ENCODE measurements at regions of chr14 and their contacts with region 1.

Region 1: DNA sequence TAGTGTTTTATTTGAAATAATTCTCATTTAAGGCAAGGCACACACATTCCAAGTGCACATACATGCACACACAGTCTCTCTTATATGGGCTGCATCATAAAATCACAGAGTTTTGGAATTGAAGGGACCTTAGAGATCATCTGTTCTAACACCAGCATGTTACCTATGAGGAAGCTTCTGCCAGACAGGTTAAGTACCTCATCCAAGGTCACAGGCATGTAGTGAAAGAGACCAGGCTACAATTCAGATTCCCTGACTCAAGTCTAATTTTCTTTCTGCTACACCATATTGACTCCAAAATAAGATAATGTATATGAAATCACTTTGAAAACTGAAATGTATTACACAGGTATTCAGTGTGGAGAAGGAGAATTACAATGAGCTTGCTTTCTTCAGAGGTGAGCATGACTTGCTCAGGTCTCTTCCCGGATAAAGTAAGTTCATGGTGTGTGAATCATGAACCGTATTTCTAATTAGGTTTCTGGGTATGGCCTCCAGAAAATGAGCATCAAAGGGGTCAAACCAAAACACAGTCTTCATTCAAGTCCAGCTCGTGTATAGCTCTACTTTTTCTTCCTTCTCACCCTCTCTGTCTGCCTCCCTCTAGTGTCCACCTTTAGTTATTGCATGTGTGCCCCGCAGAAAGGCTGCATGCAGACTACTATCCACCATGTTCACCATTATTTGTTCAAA is 411.9 kb downstream of the FUT8 start:
- DNase-seq: peak; percentile 78
- H3K4me3 Mint-ChIP-seq: no peak overlapping the region
- H3K27ac Mint-ChIP-seq: no peak overlapping the region
- H3K4me1 Mint-ChIP-seq: peaks cover 5% of the 10 kb centered on the region
- H3K27me3 Mint-ChIP-seq: no peaks in the 10 kb centered on the region

Region 2: GRCh38 chr14:65164068-65164824 is 660.2 kb before region 1 on chr14:
- CTCF ChIA-PET with region 1: interaction called, 45 read pairs
- intact Hi-C with region 1: loop called (anchors 1 kb)
- DNase-seq: peak; percentile 57
- H3K4me3 Mint-ChIP-seq: no peak overlapping the region
- H3K27ac Mint-ChIP-seq: no peak overlapping the region
- H3K4me1 Mint-ChIP-seq: peaks cover 5% of the 10 kb centered on the region
- H3K27me3 Mint-ChIP-seq: no peaks in the 10 kb centered on the region

Region 3: GRCh38 chr14:65287264-65288131 is 536.9 kb before region 1 on chr14:
- CTCF ChIA-PET with region 1: interaction called, 3 read pairs
- intact Hi-C with region 1: loop called (anchors 1 kb)
- DNase-seq: peak; percentile 66
- H3K4me3 Mint-ChIP-seq: peak overlapping the region; percentile 74
- H3K27ac Mint-ChIP-seq: peak overlapping the region; percentile 98
- H3K4me1 Mint-ChIP-seq: peaks cover 64% of the 10 kb centered on the region
- H3K27me3 Mint-ChIP-seq: no peaks in the 10 kb centered on the region

Region 4: DNA sequence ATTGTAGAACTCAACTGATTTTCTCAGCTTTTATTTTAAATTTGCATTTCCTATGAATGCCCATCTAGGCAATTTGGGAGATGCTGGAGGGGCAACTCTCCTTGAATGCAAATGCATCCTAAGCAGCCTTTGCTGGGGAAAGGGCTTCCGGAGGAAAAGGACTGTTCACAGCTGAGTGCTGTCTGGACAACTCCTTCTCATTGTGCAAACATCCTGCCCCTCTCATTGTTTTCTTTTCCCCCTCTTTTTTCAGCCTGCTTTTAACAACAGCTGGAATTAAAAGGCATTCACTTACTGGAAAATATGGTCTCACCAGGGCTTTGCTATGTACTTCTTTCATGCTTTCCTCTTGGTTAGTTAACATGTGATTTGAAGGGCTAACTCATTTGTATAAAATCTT is 14.1 kb before region 1 on chr14:
- CTCF ChIA-PET with region 1: interaction called, 14 read pairs
- intact Hi-C with region 1: no loop called
- DNase-seq: no peak
- H3K4me3 Mint-ChIP-seq: no peak overlapping the region
- H3K27ac Mint-ChIP-seq: no peak overlapping the region
- H3K4me1 Mint-ChIP-seq: no peaks in the 10 kb centered on the region
- H3K27me3 Mint-ChIP-seq: no peaks in the 10 kb centered on the region

Region 5: GRCh38 chr14:66070509-66071319 is 246.3 kb after region 1 on chr14:
- CTCF ChIA-PET with region 1: interaction called, 3 read pairs
- intact Hi-C with region 1: loop called (anchors 5 kb)
- DNase-seq: peak; percentile 73
- H3K4me3 Mint-ChIP-seq: no peak overlapping the region
- H3K27ac Mint-ChIP-seq: no peak overlapping the region
- H3K4me1 Mint-ChIP-seq: no peaks in the 10 kb centered on the region
- H3K27me3 Mint-ChIP-seq: no peaks in the 10 kb centered on the region